ENCODE measurements at regions of chr4 and their contacts with region 1.

Region 1: GRCh38 chr4:158182736-158183135 is 9.9 kb upstream of the GASK1B start:
- DNase-seq: no peak

Region 2: DNA sequence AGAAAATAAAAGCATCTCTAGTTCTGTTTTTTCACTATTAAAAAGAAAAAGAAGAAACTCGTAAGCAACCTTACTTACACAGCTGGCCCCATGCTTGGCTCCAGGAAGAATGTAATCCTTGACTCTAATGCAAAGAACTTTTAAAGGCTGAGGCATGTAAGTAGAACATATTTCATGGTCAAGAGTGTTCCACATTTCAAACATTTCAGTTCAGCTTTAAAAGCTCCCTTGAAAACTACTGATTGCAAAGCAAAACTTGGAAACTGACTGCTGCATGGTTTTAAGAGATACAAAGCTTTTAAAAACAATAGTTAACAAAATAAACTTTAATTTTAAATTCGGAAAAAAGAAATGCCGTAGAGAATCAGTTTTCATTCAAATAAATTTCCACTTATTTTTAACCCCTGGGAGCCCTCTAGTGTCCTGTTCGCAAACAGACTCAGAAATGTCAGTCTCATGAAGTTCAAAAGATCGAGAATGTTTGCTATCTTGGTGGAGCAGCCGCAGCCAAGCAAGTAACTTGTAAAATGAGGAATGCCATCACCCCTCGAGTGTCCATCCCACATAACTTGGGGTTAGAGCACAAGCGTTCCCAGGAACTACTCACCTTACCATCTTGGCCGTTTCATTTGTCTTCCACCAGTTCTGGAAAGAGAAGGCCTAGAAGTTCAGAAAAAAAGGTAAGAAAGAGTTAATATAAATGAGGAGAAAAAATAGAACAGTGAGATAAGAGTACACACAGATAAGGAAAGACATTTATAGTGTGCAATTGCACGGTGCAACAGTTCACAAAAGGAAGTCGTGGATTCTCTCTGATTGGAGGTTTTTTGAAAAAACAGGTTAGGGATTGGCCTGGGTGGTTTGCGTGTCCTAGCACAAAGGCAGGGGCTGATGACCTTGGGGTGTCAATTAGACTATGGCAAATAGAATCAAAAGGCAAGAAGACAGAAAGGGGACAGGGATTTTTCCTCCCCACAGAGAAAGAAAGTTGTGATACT is 10.2 kb before region 1 on chr4 and contains the start of gene GASK1B:
- CTCF ChIA-PET with region 1: interaction called, 13 read pairs
- POLR2A ChIA-PET with region 1: no interaction called
- DNase-seq: peak; percentile 37

Region 3: DNA sequence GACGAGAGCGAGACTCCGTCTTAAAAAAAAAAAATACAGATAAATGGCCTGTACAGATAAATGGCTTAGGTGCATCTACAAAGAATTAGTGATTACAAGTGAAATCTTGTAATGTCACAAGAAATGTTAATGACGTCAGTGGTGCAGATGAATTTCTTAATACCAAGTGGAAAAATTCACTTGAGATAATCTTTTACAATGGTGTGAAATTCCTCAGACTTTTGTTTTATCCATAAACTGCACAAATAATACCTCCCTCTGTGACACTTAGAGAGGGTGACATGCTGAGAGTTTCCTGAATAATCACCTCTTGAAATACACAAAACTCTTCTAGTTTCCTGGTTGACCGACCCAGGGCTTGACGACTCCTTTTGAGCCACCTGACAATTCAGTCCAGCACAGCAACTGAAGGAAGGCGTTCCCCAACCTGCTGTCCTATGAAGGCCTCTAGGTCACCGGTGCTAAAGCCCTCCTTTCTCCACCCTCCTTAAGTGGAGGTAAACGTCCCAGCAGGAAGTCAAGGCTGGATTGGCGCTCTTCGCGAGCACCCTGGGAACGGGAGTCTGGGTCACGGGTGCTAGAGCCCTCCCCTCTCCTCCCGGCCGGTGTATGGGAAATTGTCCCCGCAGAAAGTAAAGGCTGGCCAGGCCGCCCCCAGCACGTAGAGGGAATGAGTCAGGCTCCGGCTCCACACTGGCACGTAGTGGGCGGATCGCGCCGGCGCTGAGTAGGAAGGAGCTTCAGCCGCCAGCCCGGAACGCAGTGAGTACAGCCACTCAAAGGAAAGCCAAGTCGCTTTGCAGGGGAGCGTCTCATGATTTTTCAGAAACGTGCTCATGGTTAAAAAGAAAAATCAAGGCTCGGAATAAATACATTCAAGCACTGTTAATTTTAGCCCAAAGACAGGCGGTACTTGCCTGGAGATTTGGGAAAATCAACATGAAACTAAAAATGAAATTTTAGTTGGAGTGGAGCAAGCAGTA is 27.4 kb after region 1 on chr4 and contains the start of gene TMEM144:
- CTCF ChIA-PET with region 1: no interaction called
- POLR2A ChIA-PET with region 1: no interaction called
- DNase-seq: peak; percentile 77

Measured in HEK293T (cell line).